Vagina (tissue), 2 donors: ENCODE measurements at regions of chr13 and their contacts with region 1.

Region 1: GRCh38 chr13:44435142-44435982 is 61.7 kb downstream of the SERP2 start:
- DNase-seq: peak in 1 of 2 donors; percentile 99
- H3K4me3 ChIP-seq: peak overlapping the region; percentile 72
- H3K27ac ChIP-seq: peak overlapping the region; percentile 96
- H3K4me1 ChIP-seq: peaks cover 45% of the 10 kb centered on the region
- H3K27me3 ChIP-seq: no peaks in the 10 kb centered on the region
- CTCF ChIP-seq: no peak
- POLR2A ChIP-seq: peak; percentile 71 to 84

Region 2: GRCh38 chr13:43905435-43906031 is 529.8 kb before region 1 on chr13:
- intact Hi-C with region 1: loop called (anchors 5 kb)
- DNase-seq: no peak
- H3K4me3 ChIP-seq: no peak overlapping the region
- H3K27ac ChIP-seq: no peak overlapping the region
- H3K4me1 ChIP-seq: no peaks in the 10 kb centered on the region
- H3K27me3 ChIP-seq: no peaks in the 10 kb centered on the region
- CTCF ChIP-seq: peak; percentile 49 to 91 (median 88)
- POLR2A ChIP-seq: no peak

Region 3: DNA sequence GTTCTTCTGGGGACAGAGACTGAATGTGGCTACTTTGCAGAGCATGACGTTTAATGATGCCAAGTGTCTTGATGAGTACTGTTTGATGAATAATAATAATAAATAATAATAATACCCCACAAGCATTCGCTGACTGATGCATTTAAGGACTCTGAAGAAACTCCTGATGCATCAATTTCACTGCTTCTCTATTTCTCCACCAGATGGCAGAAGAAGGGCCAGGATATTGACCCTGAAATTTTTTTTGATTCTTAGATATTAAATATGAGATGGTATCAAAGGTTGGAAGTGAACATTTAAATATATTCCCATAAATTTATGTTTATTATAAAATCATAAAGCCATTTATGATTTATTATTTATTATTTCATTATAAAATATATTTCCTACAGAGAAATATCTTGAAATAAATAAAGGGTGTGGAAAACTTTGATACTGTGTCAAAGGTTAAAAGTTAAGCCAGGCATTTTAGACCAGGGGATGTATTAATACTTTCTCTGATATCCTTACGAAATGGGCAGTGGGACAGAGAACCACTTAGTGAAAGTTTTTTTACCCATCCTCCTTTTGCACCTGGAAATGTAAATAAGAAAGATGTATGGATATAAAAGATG is 384.8 kb before region 1 on chr13:
- intact Hi-C with region 1: loop called (anchors 5 kb)
- DNase-seq: no peak
- H3K4me3 ChIP-seq: no peak overlapping the region
- H3K27ac ChIP-seq: no peak overlapping the region
- H3K4me1 ChIP-seq: peaks cover 6% of the 10 kb centered on the region
- H3K27me3 ChIP-seq: no peaks in the 10 kb centered on the region
- CTCF ChIP-seq: peak; percentile 37 to 75 (median 41)
- POLR2A ChIP-seq: no peak

Region 4: DNA sequence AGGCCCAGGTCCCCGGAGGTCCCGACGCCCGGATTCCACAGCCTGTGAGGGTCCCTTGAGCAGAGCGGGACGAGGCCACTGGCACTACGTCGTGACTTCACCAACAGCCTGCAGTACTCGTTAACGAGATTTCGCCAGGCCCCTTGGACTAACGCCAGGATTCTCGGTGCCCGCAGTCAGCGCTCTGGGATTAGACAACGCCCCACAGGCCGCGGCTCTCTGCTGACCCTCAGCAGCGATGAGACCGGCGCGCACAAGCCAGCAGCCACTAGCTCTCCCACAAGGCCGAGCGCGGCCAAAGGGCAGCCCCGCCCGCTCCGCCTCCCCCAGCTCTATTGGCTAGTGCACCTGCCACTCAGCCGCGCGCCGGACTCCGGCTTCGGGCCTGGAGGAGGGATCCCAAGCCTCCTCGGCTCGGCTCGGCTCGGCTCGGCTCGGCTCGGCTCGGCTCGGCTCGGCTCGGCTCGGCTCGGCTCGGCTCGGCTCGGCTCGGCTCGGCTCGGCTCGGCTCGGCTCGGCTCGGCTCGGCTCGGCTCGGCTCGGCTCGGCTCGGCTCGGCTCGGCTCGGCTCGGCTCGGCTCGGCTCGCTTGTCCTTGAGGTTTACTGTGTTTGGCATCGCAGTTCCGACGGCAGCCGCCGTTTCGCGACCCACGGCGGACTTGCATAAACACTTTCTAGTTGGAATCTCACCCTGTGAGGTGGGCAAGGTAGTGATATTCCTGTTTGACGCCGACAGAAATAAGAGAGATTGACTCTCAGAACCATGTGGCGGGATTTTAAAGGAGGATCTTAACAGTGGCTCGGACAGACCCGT is 293.4 kb before region 1 on chr13:
- intact Hi-C with region 1: loop called (anchors 5 kb)
- DNase-seq: peak; percentile 98
- H3K4me3 ChIP-seq: peak overlapping the region; percentile 40 to 61
- H3K27ac ChIP-seq: peak overlapping the region; percentile 83
- H3K4me1 ChIP-seq: peaks cover 5% of the 10 kb centered on the region
- H3K27me3 ChIP-seq: no peaks in the 10 kb centered on the region
- CTCF ChIP-seq: peak in 1 of 3 experiments; percentile 12
- POLR2A ChIP-seq: peak; percentile 8 to 96

Region 5: DNA sequence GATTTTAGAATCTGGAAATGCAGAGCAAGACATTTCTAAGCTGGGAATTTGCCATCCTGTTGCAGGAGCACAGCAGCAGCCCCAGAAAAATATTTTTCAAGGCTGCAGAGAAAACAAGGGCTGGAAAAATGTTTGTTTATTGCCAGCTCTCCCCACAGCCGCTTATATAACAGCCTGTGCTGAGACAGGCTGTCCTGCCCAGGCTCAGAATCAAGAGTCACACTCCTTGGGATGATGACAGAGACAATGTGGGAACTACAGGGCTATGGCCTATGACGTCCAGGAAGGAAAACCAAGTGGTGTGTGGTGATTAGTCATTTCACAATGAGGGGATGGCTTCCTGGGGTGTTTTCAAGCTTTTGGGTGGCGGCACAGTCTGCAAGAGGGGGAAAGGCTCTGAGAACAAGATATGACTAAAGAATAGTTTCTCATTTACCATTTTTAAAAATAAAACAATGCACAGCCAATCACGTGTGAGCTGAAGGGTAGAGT is 198.0 kb before region 1 on chr13:
- intact Hi-C with region 1: loop called (anchors 10 kb)
- DNase-seq: peak in 1 of 2 donors; percentile 97
- H3K4me3 ChIP-seq: no peak overlapping the region
- H3K27ac ChIP-seq: peak overlapping the region; percentile 90
- H3K4me1 ChIP-seq: peaks cover 50% of the 10 kb centered on the region
- H3K27me3 ChIP-seq: no peaks in the 10 kb centered on the region
- CTCF ChIP-seq: no peak
- POLR2A ChIP-seq: no peak